ENCODE measurements at regions of chr1 and their contacts with region 1.

Region 1: GRCh38 chr1:208025031-208025430 is 114.1 kb upstream of the CD34 start:
- DNase-seq: no peak
- ATAC-seq: no peak

Region 2: DNA sequence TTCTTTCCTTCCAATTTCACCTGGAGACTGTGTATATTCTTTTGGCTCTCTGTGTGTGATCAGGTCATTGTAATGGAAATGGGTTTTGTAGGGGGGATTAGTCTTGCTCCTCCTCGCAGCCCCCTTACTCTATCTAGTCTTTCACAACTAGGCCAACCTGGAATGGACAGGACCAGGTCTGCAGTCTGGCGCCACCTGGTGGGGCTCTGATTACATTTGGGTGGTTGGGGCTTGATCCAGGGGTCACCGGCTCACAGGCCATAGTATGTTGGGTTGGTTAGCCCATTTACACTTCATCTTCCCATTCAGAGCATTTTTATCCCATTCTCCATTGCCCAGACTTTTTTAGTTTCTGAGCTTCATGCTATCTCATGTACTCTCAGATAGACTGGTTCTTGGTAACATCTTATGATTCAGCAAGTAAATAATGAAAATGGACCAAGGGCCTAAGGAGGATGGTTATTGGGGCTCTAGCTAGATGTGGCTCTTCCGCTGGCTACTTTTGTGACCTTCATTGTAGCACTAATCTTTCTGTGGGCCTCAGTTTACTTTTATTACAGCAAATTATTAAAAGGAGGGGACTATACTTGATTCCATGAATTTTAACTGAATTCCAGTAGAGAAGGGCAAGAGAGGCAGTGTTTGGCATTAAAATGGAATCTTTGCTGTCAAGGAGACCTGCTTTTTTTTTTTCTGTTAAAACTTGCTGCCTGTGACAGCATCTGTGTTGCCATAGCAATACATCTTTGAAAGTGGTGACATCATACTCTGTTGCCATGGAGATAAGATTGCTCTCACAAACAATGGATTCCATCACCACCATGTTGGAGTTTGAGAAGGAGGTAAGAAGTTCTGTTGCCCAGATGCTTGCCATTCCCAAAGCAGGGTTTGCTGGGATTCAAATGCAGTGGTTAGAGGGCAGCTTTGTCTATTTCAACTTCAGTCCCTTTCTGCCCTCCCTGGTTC is 69.0 kb after region 1 on chr1:
- intact Hi-C with region 1: loop called (anchors 5 kb)
- DNase-seq: peak; percentile 85
- ATAC-seq: no peak

Region 3: DNA sequence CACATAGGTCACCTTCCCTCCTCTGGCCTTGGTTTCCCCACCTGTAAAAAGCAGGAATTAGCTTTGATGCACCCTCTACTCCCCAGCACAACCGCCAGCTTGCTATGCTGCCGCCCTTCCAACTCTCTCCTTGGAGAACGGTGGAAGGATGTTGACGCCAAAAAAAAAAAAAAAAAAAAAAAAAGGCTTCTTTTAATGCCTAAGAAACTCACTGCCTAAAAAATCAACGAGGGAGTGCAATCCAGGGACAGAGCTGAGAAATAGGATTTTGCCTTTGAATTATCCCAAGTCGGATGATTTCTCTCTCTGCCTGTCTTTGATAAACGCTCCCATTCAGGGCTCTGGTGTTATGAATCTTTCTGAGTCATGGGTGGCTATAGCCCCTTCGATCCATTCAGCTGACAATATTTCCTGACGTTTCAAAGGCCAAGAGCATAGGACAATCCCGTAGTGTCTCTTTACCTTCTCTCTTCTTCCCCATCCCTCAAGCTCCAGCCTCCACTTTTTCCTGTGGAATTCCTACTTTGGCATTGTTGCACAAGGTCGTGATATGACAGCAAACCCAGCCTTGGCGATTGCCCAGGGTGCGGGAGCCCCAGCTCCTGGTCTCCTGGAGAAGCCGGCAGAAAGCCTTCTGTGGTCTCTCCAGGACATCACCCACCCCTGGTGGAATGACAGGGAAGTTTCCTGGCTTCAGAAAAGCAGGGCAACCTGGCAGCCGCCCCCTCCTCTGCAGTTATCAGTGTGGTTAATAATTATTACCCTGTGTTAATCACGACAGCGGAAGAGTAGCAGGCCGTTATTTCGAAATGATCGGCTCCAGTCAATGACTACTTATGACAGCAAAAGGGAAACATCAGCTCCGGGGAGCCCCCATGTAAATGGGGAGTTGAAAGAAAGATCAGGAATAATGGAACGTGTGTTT is 227.1 kb after region 1 on chr1:
- intact Hi-C with region 1: loop called (anchors 2 kb)
- DNase-seq: peak; percentile 64
- ATAC-seq: peak; percentile 54

Region 4: GRCh38 chr1:209860293-209860881 is 1835.4 kb after region 1 on chr1:
- intact Hi-C with region 1: no loop called
- DNase-seq: peak; percentile 81
- ATAC-seq: peak; percentile 59

Measured in Right ventricle myocardium inferior (tissue), 1 donor.